ENCODE measurements at regions of chr13 and their contacts with region 1.

Region 1: GRCh38 chr13:41496420-41497234 is 39.3 kb downstream of the RGCC start:
- DNase-seq: no peak
- ATAC-seq: peak; percentile 25 to 47
- H3K4me3 ChIP-seq: no peak overlapping the region
- H3K27ac ChIP-seq: peak overlapping the region; percentile 33 to 52 (median 43)
- H3K4me1 ChIP-seq: peaks cover 16 to 19% of the 10 kb centered on the region in 2 donors
- H3K27me3 ChIP-seq: no peaks in the 10 kb centered on the region
- CTCF ChIP-seq: no peak
- POLR2A ChIP-seq: no peak

Region 2: DNA sequence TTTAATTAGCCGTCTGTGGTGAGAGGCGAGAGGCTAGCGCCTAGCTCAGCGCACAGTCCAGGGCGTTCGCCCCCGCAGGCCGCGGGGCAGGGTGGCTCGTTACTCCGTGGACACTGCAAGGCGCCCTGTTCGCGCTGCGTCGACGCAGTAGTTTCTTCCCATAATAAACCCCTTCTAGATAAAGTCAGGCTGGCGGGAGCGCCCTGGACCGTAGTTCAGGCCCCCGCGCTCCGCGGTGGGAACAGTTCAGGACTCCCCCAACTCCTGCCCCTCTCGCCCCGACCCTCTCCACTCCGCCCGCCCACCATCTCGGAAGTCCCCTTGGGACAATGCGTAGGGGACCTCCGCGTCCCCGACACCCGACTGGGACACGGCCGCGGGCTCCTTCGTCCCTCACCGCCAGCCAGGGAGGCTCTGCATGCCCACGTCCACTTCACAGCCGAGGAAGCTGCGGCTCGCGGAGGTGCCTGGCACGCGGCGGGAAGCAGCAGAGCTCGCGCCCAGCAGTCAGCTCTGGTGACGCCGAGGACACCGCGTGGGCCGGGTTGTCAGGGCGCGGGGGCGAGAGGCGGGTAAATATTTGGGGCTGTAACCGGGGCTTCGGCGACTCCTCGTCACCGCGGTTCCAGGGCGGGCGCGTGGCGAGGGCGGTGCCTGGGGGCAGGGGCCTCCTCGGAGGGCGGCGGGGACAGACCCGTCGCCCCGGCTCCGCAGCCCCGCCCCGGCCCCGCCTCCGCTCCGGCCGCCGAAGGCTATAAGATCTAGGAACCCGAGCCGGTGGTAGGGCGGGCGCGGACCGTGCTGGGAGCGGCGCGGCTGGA is 39.6 kb before region 1 on chr13 and contains the start of gene RGCC:
- in situ Hi-C with region 1: no loop called
- intact Hi-C with region 1: loop called (anchors 2 kb)
- DNase-seq: peak; percentile 17 to 45
- ATAC-seq: peak; percentile 53 to 72
- H3K4me3 ChIP-seq: peak within 1 kb of the TSS; percentile 66 to 76 (median 70)
- H3K27ac ChIP-seq: peak within 1 kb of the TSS; percentile 47 to 70 (median 62)
- H3K4me1 ChIP-seq: peaks cover 4 to 11% of the 10 kb centered on the region in 2 donors
- H3K27me3 ChIP-seq: peaks cover 18 to 36% (median 25%) of the 10 kb centered on the region in 3 donors
- CTCF ChIP-seq: no peak
- POLR2A ChIP-seq: peak in 1 of 2 donors; percentile 82
- total RNA-seq, gene RGCC: 56.1 to 135 (median 92.0) TPM

Measured in gastrocnemius medialis (tissue), 4 donors.